ENCODE measurements at regions of chr10 and their contacts with region 1.

Region 1: DNA sequence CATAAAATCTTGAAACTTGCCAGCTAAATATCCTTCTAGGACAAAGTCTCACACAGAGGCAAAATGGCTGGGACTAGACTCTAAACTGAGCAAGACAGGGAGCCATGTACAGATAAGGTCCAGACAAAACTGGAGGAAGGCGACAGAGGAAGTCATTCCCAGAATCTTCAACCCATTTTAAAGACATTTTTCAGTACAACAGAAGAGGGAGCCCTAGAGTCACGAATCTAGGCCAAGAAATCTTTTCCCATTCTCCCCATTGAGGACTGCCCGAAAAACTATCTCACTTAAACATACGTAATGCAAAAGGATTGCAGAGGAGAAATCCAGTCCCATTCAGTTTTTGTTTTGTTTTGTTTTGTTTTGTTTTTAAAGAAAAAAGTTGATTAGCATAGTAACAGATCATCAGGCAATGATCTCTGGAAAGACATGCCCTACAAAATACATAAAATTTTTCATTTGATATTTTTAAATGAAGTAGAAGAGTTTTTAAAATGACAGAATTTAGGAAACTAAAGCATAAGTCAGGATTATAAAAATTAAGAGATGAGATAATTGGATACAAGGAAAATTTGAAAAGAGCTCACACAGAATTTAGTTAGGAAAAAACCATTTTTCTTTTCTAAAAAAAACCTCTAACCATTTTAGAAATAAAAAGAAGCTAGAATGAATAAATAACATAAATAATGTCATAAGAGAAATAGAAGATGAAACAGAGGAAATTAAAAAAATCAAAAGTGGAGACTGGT is 16.9 kb upstream of the PRF1 start:
- ATAC-seq: peak in 2 of 8 experiments; percentile 41 to 59
- H3K4me3 ChIP-seq: no peak overlapping the region
- H3K27ac ChIP-seq: no peak overlapping the region
- H3K4me1 ChIP-seq: peaks cover 0 to 14% of the 10 kb centered on the region in 2 donors

Region 2: GRCh38 chr10:70191972-70192305 is 427.5 kb before region 1 on chr10:
- in situ Hi-C with region 1: no loop called
- ATAC-seq: peak in 3 of 8 experiments; percentile 70 to 80 (median 77)
- H3K4me3 ChIP-seq: no peak overlapping the region
- H3K27ac ChIP-seq: no peak overlapping the region
- H3K4me1 ChIP-seq: peaks cover 7 to 10% of the 10 kb centered on the region in 2 donors

Region 3: DNA sequence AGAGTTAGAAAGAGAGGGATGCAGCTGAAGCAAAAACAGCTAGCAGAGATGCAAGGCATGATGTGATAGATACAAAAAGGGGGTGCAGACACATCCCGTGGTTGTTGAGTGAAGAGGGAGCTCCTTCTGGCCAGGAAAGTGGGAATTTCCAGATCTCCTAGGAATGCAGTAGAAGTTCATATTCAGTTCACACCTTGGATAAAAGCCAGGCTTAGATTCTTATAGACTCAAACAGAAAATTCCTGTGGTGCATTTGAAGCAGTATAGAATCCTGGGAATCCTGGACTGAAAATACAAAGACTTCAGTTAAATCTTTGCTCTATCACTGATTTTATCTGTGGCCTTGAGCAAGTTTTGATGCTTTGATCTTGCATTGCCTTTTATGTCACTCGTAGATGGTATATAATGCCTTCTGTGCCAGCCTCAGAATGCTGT is 230.2 kb after region 1 on chr10:
- in situ Hi-C with region 1: loop called in 1 of 9 experiments (anchors 25 kb)
- ATAC-seq: peak in 3 of 8 experiments; percentile 19 to 71 (median 51)
- H3K4me3 ChIP-seq: no peak overlapping the region
- H3K27ac ChIP-seq: no peak overlapping the region
- H3K4me1 ChIP-seq: peaks cover 2% of the 10 kb centered on the region in 2 donors

Region 4: GRCh38 chr10:71015674-71016073 is 396.2 kb after region 1 on chr10:
- in situ Hi-C with region 1: no loop called
- ATAC-seq: peak in 5 of 8 experiments; percentile 44 to 93 (median 78)
- H3K4me3 ChIP-seq: no peak overlapping the region
- H3K27ac ChIP-seq: no peak overlapping the region
- H3K4me1 ChIP-seq: peaks cover 6 to 12% of the 10 kb centered on the region in 2 donors

Region 5: GRCh38 chr10:71092812-71093401 is 473.5 kb after region 1 on chr10:
- in situ Hi-C with region 1: no loop called
- ATAC-seq: no peak
- H3K4me3 ChIP-seq: no peak overlapping the region
- H3K27ac ChIP-seq: no peak overlapping the region
- H3K4me1 ChIP-seq: no peaks in the 10 kb centered on the region

Region 6: GRCh38 chr10:71244431-71245419 is 625.3 kb after region 1 on chr10:
- in situ Hi-C with region 1: no loop called
- ATAC-seq: peak; percentile 54 to 82 (median 70)
- H3K4me3 ChIP-seq: no peak overlapping the region
- H3K27ac ChIP-seq: peak overlapping the region; percentile 25 to 63
- H3K4me1 ChIP-seq: peaks cover 63 to 80% of the 10 kb centered on the region in 2 donors

Measured in motor neuron (in vitro differentiated cells).